ENCODE measurements at regions of chr3 and their contacts with region 1.

Region 1: GRCh38 chr3:44913868-44914468 is 39.6 kb downstream of the TGM4 start:
- DNase-seq: peak; percentile 87
- ATAC-seq: peak; percentile 72
- H3K4me3 ChIP-seq: no peak overlapping the region
- H3K27ac ChIP-seq: no peak overlapping the region
- H3K4me1 ChIP-seq: no peaks in the 10 kb centered on the region
- H3K27me3 ChIP-seq: no peaks in the 10 kb centered on the region
- CTCF ChIP-seq: peak; percentile 93

Region 2: DNA sequence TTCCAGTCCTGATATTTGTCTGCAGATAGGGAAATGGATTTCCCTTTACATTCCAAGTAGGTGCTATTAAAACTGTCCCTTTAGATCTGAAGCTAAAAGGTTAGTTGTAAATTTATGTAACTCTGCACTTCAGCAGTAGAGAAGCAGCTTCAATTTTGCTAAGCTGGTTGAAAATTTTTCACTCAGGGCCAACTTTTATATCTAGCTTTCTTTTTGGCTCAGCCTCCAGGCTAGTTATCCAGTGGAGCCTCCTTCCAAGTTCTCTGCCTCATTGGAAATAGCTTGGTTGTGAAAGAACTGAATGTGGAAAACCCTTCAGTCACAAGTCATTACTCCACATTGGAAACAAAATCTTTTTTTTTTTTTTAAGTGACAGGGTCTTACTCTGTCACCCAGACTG is 337.4 kb before region 1 on chr3:
- CTCF ChIA-PET with region 1: no interaction called
- POLR2A ChIA-PET with region 1: no interaction called
- intact Hi-C with region 1: no loop called
- DNase-seq: no peak
- ATAC-seq: no peak
- H3K4me3 ChIP-seq: no peak overlapping the region
- H3K27ac ChIP-seq: no peak overlapping the region
- H3K4me1 ChIP-seq: no peaks in the 10 kb centered on the region
- H3K27me3 ChIP-seq: no peaks in the 10 kb centered on the region
- CTCF ChIP-seq: no peak

Region 3: DNA sequence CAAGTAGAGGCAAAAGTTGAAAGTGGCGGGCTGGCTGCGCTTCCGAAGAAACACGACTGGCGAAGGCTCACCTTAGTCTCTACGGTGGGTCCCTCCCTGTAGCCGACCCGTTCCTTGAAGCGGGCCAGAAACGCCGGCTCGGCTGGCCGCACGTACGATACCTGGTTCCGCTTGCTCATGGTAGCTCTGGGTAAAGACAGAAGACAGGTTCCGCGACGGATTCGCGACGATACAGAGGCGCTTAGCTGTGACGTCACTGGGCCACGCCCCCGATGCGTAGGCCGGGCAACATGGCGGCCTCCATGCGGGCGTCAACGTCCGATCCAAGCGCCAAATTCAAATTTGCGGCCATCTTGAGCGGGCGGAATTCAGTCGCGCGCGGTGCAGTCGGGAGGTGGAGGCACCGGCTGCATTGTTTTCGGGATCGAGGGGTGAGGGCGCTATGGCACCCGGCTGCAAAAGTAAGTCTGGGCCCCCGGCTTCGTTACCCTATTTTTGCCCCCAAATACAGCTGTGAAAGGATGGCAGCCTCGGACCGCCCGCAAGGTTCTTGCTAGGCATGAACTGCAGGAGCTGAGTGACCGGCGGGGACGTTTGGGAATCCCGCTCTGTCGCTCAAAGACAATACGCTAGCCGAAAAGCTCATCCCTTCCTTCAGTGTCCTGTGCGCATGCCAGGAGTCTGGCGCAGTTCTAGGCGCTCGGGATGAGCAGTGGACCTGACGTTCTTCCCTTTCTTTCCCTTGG is 152.4 kb before region 1 on chr3 and contains the starts of genes KIAA1143 and KIF15:
- CTCF ChIA-PET with region 1: no interaction called
- POLR2A ChIA-PET with region 1: no interaction called
- intact Hi-C with region 1: loop called (anchors 2 kb)
- DNase-seq: peak; percentile 98
- ATAC-seq: peak; percentile 90
- H3K4me3 ChIP-seq: peak within 1 kb of the TSS; percentile 76
- H3K27ac ChIP-seq: peak within 1 kb of the TSS; percentile 55
- H3K4me1 ChIP-seq: peaks cover 7% of the 10 kb centered on the region
- H3K27me3 ChIP-seq: no peaks in the 10 kb centered on the region
- CTCF ChIP-seq: peak; percentile 30; the same call in 1 of the 2 replicates
- total RNA-seq, gene KIAA1143: 16.5 and 20.4 TPM in 2 replicates
- total RNA-seq, gene KIF15: 19.1 and 31.8 TPM in 2 replicates

Region 4: DNA sequence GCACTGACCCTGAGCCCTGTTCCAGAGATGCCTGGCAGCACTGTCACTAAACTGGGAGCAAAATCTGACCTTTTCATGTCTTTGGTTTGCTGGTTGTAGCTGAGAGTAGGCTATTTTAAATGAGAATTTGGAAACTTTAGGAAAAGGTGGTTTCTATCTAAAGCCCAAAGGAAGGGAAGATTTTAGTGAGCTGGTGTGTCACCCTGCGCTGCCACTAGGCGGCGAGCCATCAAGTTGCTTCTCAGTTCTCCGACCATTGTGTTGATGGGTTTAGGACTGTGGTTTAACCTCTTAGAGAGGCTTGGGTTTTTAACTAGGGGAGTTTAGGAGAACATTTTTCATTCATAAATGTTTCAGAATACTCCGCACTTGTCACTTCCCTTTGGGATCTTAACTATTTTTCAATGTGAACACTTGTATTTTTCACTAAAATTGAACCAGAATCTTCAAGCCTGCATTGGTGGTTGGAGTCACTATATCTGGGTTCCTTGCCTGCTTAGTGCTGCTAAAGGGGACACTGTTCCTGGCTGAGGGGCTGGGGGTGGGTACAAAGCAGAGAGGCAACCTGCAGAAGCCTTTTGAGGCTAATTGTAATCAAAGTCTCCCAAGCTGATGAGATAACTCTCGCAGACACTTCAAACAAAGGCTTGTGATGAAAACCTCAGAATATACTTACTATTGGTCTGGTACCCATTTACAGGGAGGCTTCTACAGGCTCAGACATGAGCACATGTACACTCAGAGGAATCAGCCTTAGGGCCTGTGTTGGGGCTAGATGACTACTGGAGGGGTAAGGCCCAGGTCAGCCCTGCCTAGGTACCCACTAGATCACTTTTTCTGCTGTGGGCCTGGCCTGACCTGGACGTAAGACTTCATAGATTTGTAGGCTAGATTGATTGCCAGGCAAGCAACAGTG is 78.8 kb after region 1 on chr3:
- CTCF ChIA-PET with region 1: interaction called, 8 read pairs
- POLR2A ChIA-PET with region 1: no interaction called
- intact Hi-C with region 1: loop called (anchors 2 kb)
- DNase-seq: peak; percentile 38
- ATAC-seq: no peak
- H3K4me3 ChIP-seq: no peak overlapping the region
- H3K27ac ChIP-seq: peak overlapping the region; percentile 68
- H3K4me1 ChIP-seq: peaks cover 42% of the 10 kb centered on the region
- H3K27me3 ChIP-seq: no peaks in the 10 kb centered on the region
- CTCF ChIP-seq: peak; percentile 89

Region 5: GRCh38 chr3:45011756-45012508 is 98.0 kb after region 1 on chr3:
- CTCF ChIA-PET with region 1: no interaction called
- POLR2A ChIA-PET with region 1: no interaction called
- intact Hi-C with region 1: no loop called
- DNase-seq: no peak
- ATAC-seq: no peak
- H3K4me3 ChIP-seq: no peak overlapping the region
- H3K27ac ChIP-seq: no peak overlapping the region
- H3K4me1 ChIP-seq: no peaks in the 10 kb centered on the region
- H3K27me3 ChIP-seq: no peaks in the 10 kb centered on the region
- CTCF ChIP-seq: no peak

Region 6: GRCh38 chr3:46585799-46586693 is 1672.1 kb after region 1 on chr3:
- CTCF ChIA-PET with region 1: no interaction called
- POLR2A ChIA-PET with region 1: no interaction called
- intact Hi-C with region 1: no loop called
- DNase-seq: no peak
- ATAC-seq: no peak
- H3K4me3 ChIP-seq: no peak overlapping the region
- H3K27ac ChIP-seq: no peak overlapping the region
- H3K4me1 ChIP-seq: no peaks in the 10 kb centered on the region
- H3K27me3 ChIP-seq: no peaks in the 10 kb centered on the region
- CTCF ChIP-seq: no peak